Activated CD4-positive, alpha-beta memory T cell treated with anti-CD3 and anti-CD28 coated beads for 36 hours (primary cell): ENCODE measurements at regions of chr2 and their contacts with region 1.

Region 1: GRCh38 chr2:15159751-15160177 is 401.4 kb downstream of the NBAS start:
- DNase-seq: no peak
- H3K4me3 Mint-ChIP-seq: no peak overlapping the region
- H3K27ac Mint-ChIP-seq: no peak overlapping the region
- H3K4me1 Mint-ChIP-seq: no peaks in the 10 kb centered on the region
- H3K27me3 Mint-ChIP-seq: peaks cover 6% of the 10 kb centered on the region

Region 2: DNA sequence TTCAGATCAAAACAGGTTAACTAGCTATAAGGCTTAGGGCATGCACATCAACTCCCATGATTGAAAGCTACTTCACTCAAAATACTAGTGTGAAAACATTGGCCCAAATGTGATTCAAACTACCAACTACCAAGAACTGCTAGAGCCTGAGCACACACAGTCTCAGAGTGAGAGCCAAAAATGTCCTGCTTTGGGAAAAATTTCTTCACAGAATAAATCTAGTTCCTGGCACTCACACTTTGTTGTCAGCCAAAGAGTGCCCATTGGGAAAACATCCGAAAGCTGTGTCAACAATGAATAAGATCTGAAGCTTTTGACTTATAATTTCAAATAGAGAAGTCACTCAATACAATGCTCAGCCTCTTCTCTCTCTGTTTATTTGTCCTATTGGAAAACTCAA is 344.6 kb before region 1 on chr2:
- CTCF ChIA-PET with region 1: no interaction called
- POLR2A ChIA-PET with region 1: no interaction called
- intact Hi-C with region 1: no loop called
- DNase-seq: no peak
- H3K4me3 Mint-ChIP-seq: no peak overlapping the region
- H3K27ac Mint-ChIP-seq: no peak overlapping the region
- H3K4me1 Mint-ChIP-seq: no peaks in the 10 kb centered on the region
- H3K27me3 Mint-ChIP-seq: no peaks in the 10 kb centered on the region

Region 3: GRCh38 chr2:15058015-15058720 is 101.6 kb before region 1 on chr2:
- CTCF ChIA-PET with region 1: no interaction called
- POLR2A ChIA-PET with region 1: no interaction called
- intact Hi-C with region 1: loop called (anchors 10 kb)
- DNase-seq: peak; percentile 29
- H3K4me3 Mint-ChIP-seq: no peak overlapping the region
- H3K27ac Mint-ChIP-seq: no peak overlapping the region
- H3K4me1 Mint-ChIP-seq: no peaks in the 10 kb centered on the region
- H3K27me3 Mint-ChIP-seq: peaks cover 13% of the 10 kb centered on the region